Activated naive CD4-positive, alpha-beta T cell treated with anti-CD3 and anti-CD28 coated beads for 36 hours (primary cell): ENCODE measurements at regions of chrX and their contacts with region 1.

Region 1: DNA sequence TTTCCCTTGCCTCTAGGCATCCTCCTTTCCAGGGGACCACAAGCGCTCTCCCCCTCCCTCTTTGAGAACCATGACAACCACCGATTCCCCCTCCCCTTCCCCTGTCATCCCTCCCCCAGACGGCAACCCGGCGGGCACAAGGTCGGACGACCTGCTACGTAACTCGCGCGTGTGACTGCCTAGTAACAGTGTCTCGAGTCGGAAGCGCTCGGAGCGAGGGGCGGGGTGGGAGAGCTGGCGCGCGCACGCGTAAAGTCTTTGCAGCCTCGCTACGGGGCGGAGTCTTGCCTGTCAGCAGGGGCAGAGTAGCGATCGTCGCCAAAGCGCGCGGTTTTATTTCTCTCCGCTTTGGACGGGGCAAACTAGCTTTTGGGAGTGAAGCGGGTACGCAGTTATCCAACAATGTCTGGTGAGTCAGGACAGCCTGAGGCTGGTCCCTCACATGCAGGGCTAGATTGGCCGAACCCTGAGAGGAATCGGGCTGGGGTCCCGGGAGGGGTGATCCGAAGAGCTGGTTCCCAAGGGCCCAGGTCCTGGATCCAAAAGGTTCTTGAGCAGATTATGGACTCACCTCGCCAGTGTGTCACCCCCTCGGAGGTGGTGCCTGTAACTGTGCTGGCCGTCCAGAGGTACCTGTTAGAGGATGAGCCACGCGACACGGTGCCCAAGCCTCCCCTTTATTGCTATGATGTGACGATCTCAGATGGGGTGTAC is at the start of gene RADX:
- DNase-seq: peak; percentile 89
- H3K4me3 Mint-ChIP-seq: peak within 1 kb of the TSS; percentile 87
- H3K27ac Mint-ChIP-seq: peak within 1 kb of the TSS; percentile 85
- H3K4me1 Mint-ChIP-seq: peaks cover 14% of the 10 kb centered on the region
- H3K27me3 Mint-ChIP-seq: no peaks in the 10 kb centered on the region
- total RNA-seq, gene RADX: 13.1 to 14.8 TPM

Region 2: DNA sequence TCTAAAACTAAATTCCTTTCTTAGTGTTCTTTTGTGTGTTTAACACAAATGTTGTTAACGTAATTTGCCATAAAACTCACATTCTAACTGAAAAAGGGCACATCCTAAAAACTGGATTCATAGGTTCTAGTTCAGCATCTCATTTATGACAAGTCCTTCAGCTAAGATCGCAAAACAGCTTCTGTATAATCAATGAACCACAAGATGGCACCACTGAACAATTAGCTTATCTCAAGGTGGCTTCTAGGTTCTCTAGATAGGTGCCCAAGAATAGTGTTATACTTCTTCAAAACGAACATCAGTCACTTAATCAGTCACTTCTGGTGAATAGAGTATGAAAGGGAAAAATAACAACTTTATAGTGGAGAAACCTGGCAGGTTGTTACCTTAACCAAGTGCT is 735.2 kb before region 1 on chrX:
- CTCF ChIA-PET with region 1: no interaction called
- intact Hi-C with region 1: no loop called
- DNase-seq: no peak
- H3K4me3 Mint-ChIP-seq: no peak overlapping the region
- H3K27ac Mint-ChIP-seq: no peak overlapping the region
- H3K4me1 Mint-ChIP-seq: no peaks in the 10 kb centered on the region
- H3K27me3 Mint-ChIP-seq: no peaks in the 10 kb centered on the region

Region 3: GRCh38 chrX:106499473-106499872 is 112.4 kb before region 1 on chrX:
- CTCF ChIA-PET with region 1: interaction called, 5 read pairs
- intact Hi-C with region 1: loop called (anchors 5 kb)
- DNase-seq: no peak
- H3K4me3 Mint-ChIP-seq: no peak overlapping the region
- H3K27ac Mint-ChIP-seq: no peak overlapping the region
- H3K4me1 Mint-ChIP-seq: peaks cover 6% of the 10 kb centered on the region
- H3K27me3 Mint-ChIP-seq: no peaks in the 10 kb centered on the region

Region 4: GRCh38 chrX:106626789-106627188 is 15.0 kb after region 1 on chrX:
- CTCF ChIA-PET with region 1: no interaction called
- intact Hi-C with region 1: no loop called
- DNase-seq: no peak
- H3K4me3 Mint-ChIP-seq: no peak overlapping the region
- H3K27ac Mint-ChIP-seq: no peak overlapping the region
- H3K4me1 Mint-ChIP-seq: no peaks in the 10 kb centered on the region
- H3K27me3 Mint-ChIP-seq: no peaks in the 10 kb centered on the region

Region 5: DNA sequence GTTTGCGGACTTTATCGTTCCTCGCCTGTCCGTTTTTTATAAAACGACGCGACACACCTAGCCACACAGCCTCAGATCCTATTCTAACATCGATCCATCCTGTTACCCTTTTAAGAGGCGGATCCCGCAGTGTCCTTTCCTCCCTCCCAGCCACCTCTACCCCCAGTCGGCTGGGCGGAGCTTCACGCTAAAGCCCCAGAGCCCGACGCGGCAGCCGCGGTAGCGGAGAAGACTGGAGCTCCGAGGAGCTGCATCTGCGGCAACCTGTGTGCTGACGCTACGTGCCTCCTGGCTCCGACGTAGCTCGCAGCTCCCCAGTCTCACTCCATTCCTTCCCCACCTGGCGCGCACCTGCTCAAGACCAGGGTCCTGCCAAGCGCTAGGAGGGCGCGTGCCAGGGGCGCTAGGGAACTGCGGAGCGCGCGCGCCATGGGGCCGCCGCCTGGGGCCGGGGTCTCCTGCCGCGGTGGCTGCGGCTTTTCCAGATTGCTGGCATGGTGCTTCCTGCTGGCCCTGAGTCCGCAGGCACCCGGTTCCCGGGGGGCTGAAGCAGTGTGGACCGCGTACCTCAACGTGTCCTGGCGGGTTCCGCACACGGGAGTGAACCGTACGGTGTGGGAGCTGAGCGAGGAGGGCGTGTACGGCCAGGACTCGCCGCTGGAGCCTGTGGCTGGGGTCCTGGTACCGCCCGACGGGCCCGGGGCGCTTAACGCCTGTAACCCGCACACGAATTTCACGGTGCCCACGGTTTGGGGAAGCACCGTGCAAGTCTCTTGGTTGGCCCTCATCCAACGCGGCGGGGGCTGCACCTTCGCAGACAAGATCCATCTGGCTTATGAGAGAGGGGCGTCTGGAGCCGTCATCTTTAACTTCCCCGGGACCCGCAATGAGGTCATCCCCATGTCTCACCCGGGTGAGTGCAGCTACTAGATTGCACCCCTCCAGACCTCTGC is 114.9 kb after region 1 on chrX and contains the start of gene RNF128:
- CTCF ChIA-PET with region 1: no interaction called
- intact Hi-C with region 1: loop called (anchors 1 kb)
- DNase-seq: peak; percentile 38
- H3K4me3 Mint-ChIP-seq: peak within 1 kb of the TSS; percentile 67
- H3K27ac Mint-ChIP-seq: no peak within 1 kb of the TSS
- H3K4me1 Mint-ChIP-seq: peaks cover 7% of the 10 kb centered on the region
- H3K27me3 Mint-ChIP-seq: peaks cover 34% of the 10 kb centered on the region
- total RNA-seq, gene RNF128: not detected

Region 6: GRCh38 chrX:107118322-107119147 is 506.7 kb after region 1 on chrX and contains the start of gene RBM41:
- CTCF ChIA-PET with region 1: no interaction called
- intact Hi-C with region 1: loop called (anchors 10 kb)
- DNase-seq: peak; percentile 82
- H3K4me3 Mint-ChIP-seq: peak within 1 kb of the TSS; percentile 99
- H3K27ac Mint-ChIP-seq: peak within 1 kb of the TSS; percentile 95
- H3K4me1 Mint-ChIP-seq: peaks cover 24% of the 10 kb centered on the region
- H3K27me3 Mint-ChIP-seq: no peaks in the 10 kb centered on the region
- total RNA-seq, gene RBM41: 10.4 to 11.1 TPM

Region 7: GRCh38 chrX:108091266-108091877 is 1479.5 kb after region 1 on chrX and contains the starts of genes ATG4A and PSMD10:
- CTCF ChIA-PET with region 1: no interaction called
- intact Hi-C with region 1: loop called (anchors 2 kb)
- DNase-seq: peak; percentile 94
- H3K4me3 Mint-ChIP-seq: no peak within 1 kb of the TSS
- H3K27ac Mint-ChIP-seq: no peak within 1 kb of the TSS
- H3K4me1 Mint-ChIP-seq: peaks cover 19% of the 10 kb centered on the region
- H3K27me3 Mint-ChIP-seq: no peaks in the 10 kb centered on the region
- total RNA-seq, gene ATG4A: 8.2 to 8.6 TPM
- total RNA-seq, gene PSMD10: 54.6 to 58.8 TPM